ENCODE measurements at regions of chr14 and their contacts with region 1.

Region 1: GRCh38 chr14:56339855-56340701 is 221.9 kb downstream of the PELI2 start:
- DNase-seq: peak; percentile 53
- ATAC-seq: peak; percentile 96
- H3K4me3 ChIP-seq: no peak overlapping the region
- H3K27ac ChIP-seq: no peak overlapping the region
- H3K4me1 ChIP-seq: peaks cover 0 to 9% of the 10 kb centered on the region in 2 experiments; a peak in 1 of 4 replicates
- H3K27me3 ChIP-seq: no peaks in the 10 kb centered on the region
- CTCF ChIP-seq: peak; percentile 61 to 92 (median 85); a peak in 5 of 6 replicates
- POLR2A ChIP-seq: no peak
- RAD21 ChIP-seq: peak; percentile 79

Region 2: DNA sequence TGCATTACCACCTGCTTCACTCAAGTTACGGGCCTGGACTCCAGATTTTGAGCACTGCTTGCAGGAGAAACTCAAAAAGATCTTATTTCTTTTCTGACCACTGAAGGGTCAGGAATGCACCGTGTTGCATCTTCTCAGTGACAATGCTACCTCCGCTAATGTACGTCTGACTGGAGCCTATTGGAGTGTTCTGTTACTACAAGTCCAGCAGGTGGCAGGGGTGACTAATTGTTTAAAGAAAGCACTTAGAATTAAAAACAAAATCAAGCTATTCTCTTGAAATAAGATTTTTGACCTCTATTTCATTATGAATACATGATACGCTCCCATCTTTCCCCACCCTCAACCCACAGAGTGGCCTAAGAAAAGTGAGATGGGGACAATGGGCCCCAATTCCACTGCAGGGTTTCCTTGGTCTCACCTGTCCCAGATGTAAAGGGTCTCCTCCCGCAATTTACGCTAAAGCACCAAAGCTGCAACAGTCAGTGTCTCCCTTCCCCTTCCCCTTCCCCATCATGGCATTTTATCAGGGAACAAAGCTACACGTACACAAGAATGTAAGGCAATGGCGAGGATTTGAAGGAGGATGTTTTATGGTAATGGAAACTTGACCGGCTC is 901.9 kb before region 1 on chr14:
- CTCF ChIA-PET with region 1: interaction called, 15 read pairs
- POLR2A ChIA-PET with region 1: no interaction called
- RAD21 ChIA-PET with region 1: interaction called in 1 of 2 experiments, 3 read pairs
- intact Hi-C with region 1: loop called (anchors 5 kb)
- DNase-seq: peak; percentile 57
- ATAC-seq: peak; percentile 94
- H3K4me3 ChIP-seq: no peak overlapping the region
- H3K27ac ChIP-seq: no peak overlapping the region
- H3K4me1 ChIP-seq: peaks cover 0 to 7% of the 10 kb centered on the region in 2 experiments; a peak in 3 of 4 replicates
- H3K27me3 ChIP-seq: no peaks in the 10 kb centered on the region
- CTCF ChIP-seq: peak; percentile 68 to 77 (median 68); a peak in 5 of 6 replicates
- POLR2A ChIP-seq: no peak
- RAD21 ChIP-seq: peak; percentile 87

Region 3: DNA sequence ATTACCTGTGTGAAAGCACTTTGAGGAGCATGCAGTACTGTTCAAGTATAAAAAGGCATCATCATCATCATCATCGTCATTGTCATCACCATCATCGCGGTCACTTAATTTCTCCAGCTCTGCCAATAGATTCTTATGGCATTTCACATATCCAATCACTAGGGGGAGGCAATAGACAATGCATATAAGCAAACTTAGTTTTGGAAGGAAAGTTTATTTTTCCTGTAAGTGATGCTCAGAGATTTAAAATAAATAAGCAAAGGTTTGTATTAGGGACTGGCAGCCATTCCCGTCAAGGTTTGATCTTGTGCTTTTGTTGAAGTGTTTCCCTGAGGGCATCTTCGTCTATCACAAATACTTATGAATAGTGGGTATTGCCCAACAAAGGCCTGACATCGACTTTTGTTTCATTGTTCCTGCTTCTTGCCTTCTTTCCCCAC is 632.7 kb before region 1 on chr14:
- CTCF ChIA-PET with region 1: interaction called, 12 read pairs
- POLR2A ChIA-PET with region 1: no interaction called
- RAD21 ChIA-PET with region 1: no interaction called
- intact Hi-C with region 1: loop called (anchors 1 kb)
- DNase-seq: no peak
- ATAC-seq: peak; percentile 67
- H3K4me3 ChIP-seq: no peak overlapping the region
- H3K27ac ChIP-seq: no peak overlapping the region
- H3K4me1 ChIP-seq: no peaks in the 10 kb centered on the region
- H3K27me3 ChIP-seq: no peaks in the 10 kb centered on the region
- CTCF ChIP-seq: peak; percentile 50 to 74 (median 53); a peak in 5 of 6 replicates
- POLR2A ChIP-seq: no peak
- RAD21 ChIP-seq: peak; percentile 83

Region 4: GRCh38 chr14:55731881-55732498 is 608.1 kb before region 1 on chr14:
- CTCF ChIA-PET with region 1: interaction called, 11 read pairs
- POLR2A ChIA-PET with region 1: no interaction called
- RAD21 ChIA-PET with region 1: interaction called in 1 of 2 experiments, 3 read pairs
- intact Hi-C with region 1: no loop called
- DNase-seq: peak; percentile 12
- ATAC-seq: peak; percentile 65
- H3K4me3 ChIP-seq: no peak overlapping the region
- H3K27ac ChIP-seq: no peak overlapping the region
- H3K4me1 ChIP-seq: peaks cover 0 to 11% of the 10 kb centered on the region in 2 experiments; a peak in 2 of 4 replicates
- H3K27me3 ChIP-seq: no peaks in the 10 kb centered on the region
- CTCF ChIP-seq: peak; percentile 34 to 67 (median 57); a peak in 5 of 6 replicates
- POLR2A ChIP-seq: no peak
- RAD21 ChIP-seq: peak; percentile 69

Region 5: DNA sequence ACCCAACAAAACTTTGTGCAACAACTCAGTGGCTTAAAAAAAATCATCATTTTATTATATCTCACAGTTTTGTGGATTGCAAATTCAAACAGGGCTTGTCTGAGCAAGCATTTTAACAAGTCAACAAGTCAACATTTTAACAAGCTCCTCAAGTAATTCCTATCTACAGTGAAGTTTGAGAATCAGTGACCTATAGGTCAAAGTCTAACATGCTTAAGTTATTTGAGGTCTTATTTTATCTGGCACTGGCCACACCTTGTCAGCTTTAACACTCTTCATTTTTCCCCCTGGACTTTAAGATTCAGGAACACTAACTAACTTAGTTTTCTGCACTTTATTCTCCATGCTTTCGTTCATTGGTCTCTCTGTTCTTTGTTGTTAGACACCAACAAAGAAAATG is 293.1 kb before region 1 on chr14:
- CTCF ChIA-PET with region 1: no interaction called
- POLR2A ChIA-PET with region 1: no interaction called
- RAD21 ChIA-PET with region 1: no interaction called
- intact Hi-C with region 1: no loop called
- DNase-seq: no peak
- ATAC-seq: no peak
- H3K4me3 ChIP-seq: no peak overlapping the region
- H3K27ac ChIP-seq: no peak overlapping the region
- H3K4me1 ChIP-seq: peaks cover 0 to 7% of the 10 kb centered on the region in 2 experiments; a peak in 1 of 4 replicates
- H3K27me3 ChIP-seq: peaks cover 15% of the 10 kb centered on the region; the same call in 1 of the 2 replicates
- CTCF ChIP-seq: no peak
- POLR2A ChIP-seq: no peak
- RAD21 ChIP-seq: no peak

Region 6: GRCh38 chr14:56247468-56248200 is 92.4 kb before region 1 on chr14:
- CTCF ChIA-PET with region 1: interaction called, 4 read pairs
- POLR2A ChIA-PET with region 1: no interaction called
- RAD21 ChIA-PET with region 1: no interaction called
- intact Hi-C with region 1: loop called (anchors 5 kb)
- DNase-seq: peak; percentile 4
- ATAC-seq: no peak
- H3K4me3 ChIP-seq: no peak overlapping the region
- H3K27ac ChIP-seq: no peak overlapping the region
- H3K4me1 ChIP-seq: no peaks in the 10 kb centered on the region
- H3K27me3 ChIP-seq: peaks cover 22% of the 10 kb centered on the region; the same call in 1 of the 2 replicates
- CTCF ChIP-seq: peak; percentile 29 to 53 (median 30); a peak in 4 of 6 replicates
- POLR2A ChIP-seq: no peak
- RAD21 ChIP-seq: peak; percentile 45; the same call in 1 of the 2 replicates

Region 7: DNA sequence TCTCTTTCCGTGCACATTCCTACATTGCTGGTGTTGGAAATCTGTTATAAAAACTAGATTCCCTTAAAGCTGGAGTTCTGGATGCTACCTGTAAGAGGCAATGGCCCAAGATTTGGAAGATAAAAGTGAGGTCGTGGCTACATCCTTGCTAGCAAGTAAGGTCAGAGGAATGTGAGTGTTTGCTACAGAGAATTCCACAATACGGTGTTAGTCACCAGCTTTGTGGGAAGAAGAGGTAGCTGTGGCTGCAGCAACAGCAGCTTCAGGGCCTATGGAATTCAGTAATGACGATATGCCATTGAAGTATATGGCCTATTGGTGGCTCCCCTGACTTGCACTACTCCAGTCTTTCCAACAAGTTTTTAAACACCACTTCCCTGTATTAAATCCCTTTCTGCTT is 11.8 kb after region 1 on chr14:
- CTCF ChIA-PET with region 1: interaction called, 17 read pairs
- POLR2A ChIA-PET with region 1: interaction called, 6 read pairs
- RAD21 ChIA-PET with region 1: no interaction called
- intact Hi-C with region 1: no loop called
- DNase-seq: no peak
- ATAC-seq: 0 out of 2 replicates have a peak, but pooled peaks have one; percentile 14
- H3K4me3 ChIP-seq: no peak overlapping the region
- H3K27ac ChIP-seq: no peak overlapping the region
- H3K4me1 ChIP-seq: no peaks in the 10 kb centered on the region
- H3K27me3 ChIP-seq: peaks cover 25% of the 10 kb centered on the region
- CTCF ChIP-seq: no peak
- POLR2A ChIP-seq: no peak
- RAD21 ChIP-seq: no peak